ENCODE measurements at regions of chr5 and their contacts with region 1.

Region 1: GRCh38 chr5:65229841-65230240 is 251.9 kb downstream of the ADAMTS6 start:
- DNase-seq: no peak
- ATAC-seq: no peak
- H3K4me3 ChIP-seq: no peak overlapping the region
- H3K27ac ChIP-seq: no peak overlapping the region
- H3K4me1 ChIP-seq: no peaks in the 10 kb centered on the region
- H3K27me3 ChIP-seq: no peaks in the 10 kb centered on the region
- CTCF ChIP-seq: no peak

Region 2: DNA sequence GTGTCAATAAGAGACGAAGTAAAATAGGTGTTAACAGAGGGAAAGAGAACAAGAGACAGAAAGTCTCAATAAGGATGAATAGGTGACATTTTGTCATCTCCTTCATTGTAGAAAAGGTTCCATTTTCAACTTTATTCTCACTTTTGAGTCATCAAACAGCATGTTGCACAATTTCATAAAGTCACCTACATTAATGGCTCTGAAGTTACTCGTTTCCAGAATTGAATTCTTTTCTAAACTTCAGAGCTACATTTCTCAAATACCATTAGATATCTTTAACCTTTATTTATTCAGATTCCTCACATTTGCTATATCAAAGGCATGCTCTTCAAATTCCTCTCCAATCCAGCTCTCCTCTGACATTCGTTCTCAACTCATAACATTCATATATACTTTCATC is 238.8 kb after region 1 on chr5:
- intact Hi-C with region 1: loop called in 1 of 10 experiments (anchors 10 kb)
- DNase-seq: no peak
- ATAC-seq: no peak
- H3K4me3 ChIP-seq: no peak overlapping the region
- H3K27ac ChIP-seq: no peak overlapping the region
- H3K4me1 ChIP-seq: no peaks in the 10 kb centered on the region
- H3K27me3 ChIP-seq: no peaks in the 10 kb centered on the region
- CTCF ChIP-seq: no peak

Measured in heart right ventricle (tissue), 16 donors.